ENCODE measurements at regions of chr13 and their contacts with region 1.

Region 1: GRCh38 chr13:32586080-32586900 is at the start of gene PDS5B:
- DNase-seq: peak; percentile 98
- H3K4me3 Mint-ChIP-seq: peak within 1 kb of the TSS; percentile 86
- H3K27ac Mint-ChIP-seq: peak within 1 kb of the TSS; percentile 95
- H3K4me1 Mint-ChIP-seq: peaks cover 36% of the 10 kb centered on the region
- H3K27me3 Mint-ChIP-seq: peaks cover 9% of the 10 kb centered on the region
- total RNA-seq, gene PDS5B: 60.3 and 70.2 TPM in 2 replicates

Region 2: GRCh38 chr13:30665638-30666037 is 1920.7 kb before region 1 on chr13:
- intact Hi-C with region 1: no loop called
- DNase-seq: no peak
- H3K4me3 Mint-ChIP-seq: no peak overlapping the region
- H3K27ac Mint-ChIP-seq: no peak overlapping the region
- H3K4me1 Mint-ChIP-seq: peaks cover 7% of the 10 kb centered on the region
- H3K27me3 Mint-ChIP-seq: no peaks in the 10 kb centered on the region

Region 3: GRCh38 chr13:32427852-32428580 is 158.3 kb before region 1 on chr13 and contains the start of gene N4BP2L1:
- intact Hi-C with region 1: loop called (anchors 1 kb)
- DNase-seq: peak; percentile 94
- H3K4me3 Mint-ChIP-seq: peak within 1 kb of the TSS; percentile 99
- H3K27ac Mint-ChIP-seq: peak within 1 kb of the TSS; percentile 98
- H3K4me1 Mint-ChIP-seq: peaks cover 44% of the 10 kb centered on the region
- H3K27me3 Mint-ChIP-seq: no peaks in the 10 kb centered on the region
- total RNA-seq, gene N4BP2L1: 16.6 and 17.9 TPM in 2 replicates

Region 4: GRCh38 chr13:32639502-32640105 is 53.3 kb after region 1 on chr13:
- intact Hi-C with region 1: loop called (anchors 1 kb)
- DNase-seq: peak; percentile 82
- H3K4me3 Mint-ChIP-seq: no peak overlapping the region
- H3K27ac Mint-ChIP-seq: no peak overlapping the region
- H3K4me1 Mint-ChIP-seq: peaks cover 30% of the 10 kb centered on the region
- H3K27me3 Mint-ChIP-seq: no peaks in the 10 kb centered on the region

Region 5: GRCh38 chr13:32669030-32669646 is 82.8 kb after region 1 on chr13:
- intact Hi-C with region 1: loop called (anchors 1 kb)
- DNase-seq: peak; percentile 69
- H3K4me3 Mint-ChIP-seq: no peak overlapping the region
- H3K27ac Mint-ChIP-seq: no peak overlapping the region
- H3K4me1 Mint-ChIP-seq: peaks cover 4% of the 10 kb centered on the region
- H3K27me3 Mint-ChIP-seq: no peaks in the 10 kb centered on the region

Region 6: DNA sequence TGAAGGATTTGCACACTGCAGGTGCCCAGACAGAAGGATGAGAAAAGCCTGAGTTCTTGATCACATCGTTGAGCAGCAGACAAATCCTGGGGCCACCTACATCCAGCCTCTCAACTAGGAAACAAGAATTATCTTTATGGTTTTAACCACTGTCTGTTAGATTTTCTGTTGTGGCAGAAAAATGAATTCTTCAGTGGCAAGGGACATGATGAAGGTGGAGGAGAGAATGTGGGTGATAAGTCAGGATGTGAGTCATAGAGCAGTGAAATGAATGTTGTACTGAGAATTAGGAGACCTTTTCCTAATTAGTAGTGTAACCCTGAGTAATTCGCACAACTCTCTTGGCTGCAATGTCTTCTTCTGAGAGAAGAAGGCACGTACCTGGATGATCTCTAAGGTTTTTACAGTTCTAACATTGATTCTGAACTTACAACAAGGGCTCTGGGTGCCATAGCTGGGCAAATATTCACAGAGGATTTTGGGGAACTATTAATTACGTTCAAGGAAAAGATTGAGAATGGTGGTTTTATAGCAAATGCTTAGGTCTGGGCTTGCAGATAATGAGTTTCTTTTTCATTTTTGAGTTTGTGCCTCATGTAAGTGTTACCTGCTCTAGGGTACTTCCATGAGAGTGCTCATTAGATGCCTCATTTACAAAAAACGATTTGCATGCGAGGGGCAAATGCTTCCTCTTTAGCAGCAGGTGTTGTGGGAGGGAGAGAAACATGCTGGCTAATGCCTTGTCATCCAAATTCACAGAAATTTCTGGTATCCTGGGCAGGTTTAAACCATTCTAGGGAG is 319.0 kb after region 1 on chr13:
- intact Hi-C with region 1: loop called (anchors 2 kb)
- DNase-seq: peak; percentile 77
- H3K4me3 Mint-ChIP-seq: peak overlapping the region; percentile 77
- H3K27ac Mint-ChIP-seq: peak overlapping the region; percentile 91
- H3K4me1 Mint-ChIP-seq: peaks cover 42% of the 10 kb centered on the region
- H3K27me3 Mint-ChIP-seq: peaks cover 2% of the 10 kb centered on the region

Region 7: DNA sequence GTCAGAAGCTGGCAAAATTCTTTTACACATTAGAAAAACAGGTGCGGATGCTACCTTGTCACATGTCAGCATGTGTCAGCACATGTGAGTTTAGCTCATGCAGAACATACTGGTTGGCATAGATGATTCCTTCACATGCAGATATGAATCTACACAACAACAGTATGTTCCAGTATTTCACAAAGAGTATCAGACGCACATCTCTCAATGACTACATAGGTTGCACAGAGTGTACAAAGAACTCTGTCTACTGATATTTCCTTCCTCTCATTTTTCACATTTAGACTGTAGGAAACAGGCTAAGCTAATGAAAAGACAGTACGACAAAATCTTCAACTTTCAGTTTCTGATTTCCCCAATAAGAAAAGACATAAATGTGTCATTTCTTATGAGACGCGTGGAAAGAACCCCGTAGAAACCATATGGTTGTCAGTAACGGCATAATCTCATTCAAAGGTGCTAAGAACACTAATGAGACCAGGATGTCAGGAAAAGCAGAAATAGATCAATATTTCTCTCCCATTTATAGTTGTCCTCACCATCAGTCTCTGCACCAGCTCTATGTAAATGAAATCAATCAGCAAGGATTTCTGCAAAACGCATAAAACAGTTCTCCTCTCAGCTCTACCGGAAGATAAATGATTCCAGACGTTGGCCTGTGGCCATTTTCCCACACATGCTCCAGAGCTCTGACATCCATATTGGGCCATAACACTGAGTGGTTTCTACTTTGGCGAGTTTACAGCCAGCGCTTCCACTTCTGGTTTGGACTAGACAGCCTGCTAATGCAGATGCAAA is 618.0 kb after region 1 on chr13:
- intact Hi-C with region 1: loop called (anchors 10 kb)
- DNase-seq: no peak
- H3K4me3 Mint-ChIP-seq: peak overlapping the region; percentile 82
- H3K27ac Mint-ChIP-seq: peak overlapping the region; percentile 87
- H3K4me1 Mint-ChIP-seq: peaks cover 49% of the 10 kb centered on the region
- H3K27me3 Mint-ChIP-seq: no peaks in the 10 kb centered on the region

Region 8: DNA sequence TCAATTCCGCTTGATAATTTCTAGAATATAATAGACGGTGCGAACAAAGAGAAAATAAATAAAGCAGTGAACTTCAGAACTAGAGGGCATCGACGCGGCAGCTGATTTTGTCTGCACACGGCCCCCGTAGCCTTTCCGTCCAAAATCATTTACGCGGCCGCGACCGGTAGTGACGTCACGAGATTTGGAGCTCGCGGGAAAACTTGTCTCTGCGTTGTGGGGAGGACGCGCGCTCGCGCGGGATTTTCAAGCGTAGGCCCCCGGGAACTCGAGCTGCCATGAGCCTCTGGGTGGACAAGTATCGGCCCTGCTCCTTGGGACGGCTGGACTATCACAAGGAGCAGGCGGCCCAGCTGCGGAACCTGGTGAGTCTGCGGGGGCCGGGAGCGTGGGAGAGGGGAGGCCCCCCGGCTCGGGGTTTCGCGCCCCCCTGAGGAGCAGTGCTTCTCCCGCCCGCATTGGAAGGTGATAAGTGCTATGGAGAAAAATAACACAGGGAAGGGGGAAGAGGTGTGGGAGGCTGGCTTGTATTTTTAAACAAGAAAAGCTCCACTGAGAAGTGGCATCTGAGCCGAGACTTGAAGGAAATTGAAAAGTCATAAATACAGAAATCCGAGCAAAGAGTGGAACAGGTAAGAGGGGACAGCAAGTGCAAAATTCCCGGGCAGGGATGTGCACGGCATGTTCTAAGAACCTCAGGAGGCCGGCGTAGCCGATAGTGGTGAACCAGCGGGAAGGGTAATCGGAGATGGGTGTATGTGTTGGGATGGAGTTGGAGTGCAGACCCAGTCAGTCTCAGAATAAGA is 1231.8 kb after region 1 on chr13 and contains the start of gene RFC3:
- intact Hi-C with region 1: loop called (anchors 1 kb)
- DNase-seq: peak; percentile 98
- H3K4me3 Mint-ChIP-seq: peak within 1 kb of the TSS; percentile 93
- H3K27ac Mint-ChIP-seq: peak within 1 kb of the TSS; percentile 95
- H3K4me1 Mint-ChIP-seq: peaks cover 30% of the 10 kb centered on the region
- H3K27me3 Mint-ChIP-seq: no peaks in the 10 kb centered on the region
- total RNA-seq, gene RFC3: 77.8 and 81.0 TPM in 2 replicates

Measured in activated CD4-positive, alpha-beta T cell treated with anti-CD3 and anti-CD28 coated beads, Interleukin-2, amount 10 ng/mL, durations not matched to agents 24 days and 14 days (primary cell).